Panc1 (cell line): ENCODE measurements at regions of chr3 and their contacts with region 1.

Region 1: GRCh38 chr3:135736740-135737139 is 228.8 kb upstream of the PPP2R3A start:
- DNase-seq: no peak
- ATAC-seq: no peak
- H3K4me3 ChIP-seq: no peak overlapping the region
- H3K27ac ChIP-seq: no peak overlapping the region
- H3K4me1 ChIP-seq: no peaks in the 10 kb centered on the region
- H3K27me3 ChIP-seq: no peaks in the 10 kb centered on the region; the same call in 1 of the 2 replicates
- CTCF ChIP-seq: peak; percentile 39

Region 2: GRCh38 chr3:135629701-135630408 is 106.9 kb before region 1 on chr3:
- CTCF ChIA-PET with region 1: no interaction called
- POLR2A ChIA-PET with region 1: no interaction called
- in situ Hi-C with region 1: no loop called
- intact Hi-C with region 1: no loop called
- DNase-seq: no peak
- ATAC-seq: no peak
- H3K4me3 ChIP-seq: no peak overlapping the region
- H3K27ac ChIP-seq: no peak overlapping the region
- H3K4me1 ChIP-seq: no peaks in the 10 kb centered on the region
- H3K27me3 ChIP-seq: peaks cover 4% of the 10 kb centered on the region; the same call in 1 of the 2 replicates
- CTCF ChIP-seq: no peak

Region 3: GRCh38 chr3:135678386-135678785 is 58.4 kb before region 1 on chr3:
- CTCF ChIA-PET with region 1: no interaction called
- POLR2A ChIA-PET with region 1: no interaction called
- in situ Hi-C with region 1: no loop called
- intact Hi-C with region 1: no loop called
- DNase-seq: no peak
- ATAC-seq: no peak
- H3K4me3 ChIP-seq: no peak overlapping the region
- H3K27ac ChIP-seq: no peak overlapping the region
- H3K4me1 ChIP-seq: no peaks in the 10 kb centered on the region
- H3K27me3 ChIP-seq: no peaks in the 10 kb centered on the region
- CTCF ChIP-seq: no peak

Region 4: DNA sequence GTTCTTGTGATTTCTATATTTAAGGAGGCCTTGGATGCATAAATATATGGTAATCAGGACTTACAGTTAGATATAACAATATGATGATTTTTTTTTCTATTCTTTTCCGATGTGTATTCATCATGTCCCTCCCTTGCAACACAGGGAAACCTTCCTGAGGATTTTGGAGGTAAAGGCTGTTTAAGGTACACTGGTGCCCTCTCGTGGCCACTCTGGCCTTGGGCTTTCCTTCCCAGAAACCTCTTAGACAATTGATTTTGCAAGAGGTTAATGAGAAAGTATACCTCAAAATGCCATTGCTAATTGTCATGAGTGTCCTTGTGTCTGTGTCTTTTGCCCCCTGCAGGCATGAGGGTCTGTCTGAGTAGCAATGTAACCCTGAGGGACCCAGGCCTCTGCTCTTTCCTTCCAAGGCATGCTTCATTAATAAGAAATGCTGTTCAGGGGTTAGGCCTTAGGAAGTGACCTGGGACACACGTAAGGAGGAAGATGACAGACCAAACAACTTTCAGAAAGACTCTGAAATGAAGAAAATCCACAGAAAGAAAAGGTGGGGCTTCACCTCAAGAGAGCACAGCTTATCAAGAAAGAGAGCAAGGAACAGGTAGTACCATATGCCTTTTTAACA is 158.5 kb after region 1 on chr3:
- CTCF ChIA-PET with region 1: no interaction called
- POLR2A ChIA-PET with region 1: no interaction called
- in situ Hi-C with region 1: no loop called
- intact Hi-C with region 1: loop called (anchors 10 kb)
- DNase-seq: peak; percentile 69
- ATAC-seq: peak; percentile 87
- H3K4me3 ChIP-seq: no peak overlapping the region
- H3K27ac ChIP-seq: no peak overlapping the region
- H3K4me1 ChIP-seq: no peaks in the 10 kb centered on the region
- H3K27me3 ChIP-seq: no peaks in the 10 kb centered on the region; the same call in 1 of the 2 replicates
- CTCF ChIP-seq: peak; percentile 94